ENCODE measurements at regions of chr2 and their contacts with region 1.

Region 1: DNA sequence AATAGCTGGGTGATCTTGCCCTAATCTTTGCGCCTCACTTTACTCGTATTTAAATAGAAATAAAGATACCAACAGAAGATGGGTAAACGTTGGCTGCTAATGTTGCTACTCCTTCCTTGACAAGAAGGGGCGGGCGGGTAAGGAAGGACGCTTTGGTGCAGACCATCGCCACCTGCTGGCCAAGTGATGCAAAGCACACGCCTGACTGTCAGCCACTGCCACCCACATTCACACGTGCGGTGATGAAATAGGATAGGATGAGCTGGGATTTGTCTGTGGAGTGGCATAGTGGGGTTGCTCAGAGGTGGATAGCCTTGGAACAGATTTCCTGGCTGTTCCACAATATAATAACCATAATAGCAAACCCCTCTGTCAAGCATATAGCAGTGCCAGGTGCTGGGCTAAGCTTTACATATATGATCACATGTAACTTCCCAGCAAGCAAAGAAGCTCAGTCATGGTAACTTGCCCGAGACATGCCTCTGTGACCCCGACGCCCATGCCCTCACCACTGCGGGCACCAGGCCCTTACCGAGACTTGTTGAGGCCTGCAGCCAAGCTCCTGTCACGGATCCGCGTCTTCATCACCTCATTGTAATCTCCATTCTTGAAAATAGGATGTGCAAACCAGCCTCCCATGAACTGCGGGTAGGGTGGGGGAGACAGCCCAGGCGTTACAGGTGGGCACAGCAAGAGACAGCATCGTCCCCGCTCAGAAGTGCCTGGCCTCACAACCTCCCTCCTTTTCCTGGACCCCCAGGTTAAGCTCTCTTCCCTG is 39.3 kb downstream of the LCT start:
- DNase-seq: peak; percentile 61
- H3K4me3 ChIP-seq: no peak overlapping the region
- H3K27ac ChIP-seq: no peak overlapping the region
- H3K27me3 ChIP-seq: no peaks in the 10 kb centered on the region
- CTCF ChIP-seq: peak; percentile 94

Region 2: GRCh38 chr2:134988994-134989605 is 808.6 kb before region 1 on chr2:
- CTCF ChIA-PET with region 1: interaction called, 42 read pairs
- POLR2A ChIA-PET with region 1: no interaction called
- DNase-seq: peak; percentile 3
- H3K4me3 ChIP-seq: no peak overlapping the region
- H3K27ac ChIP-seq: no peak overlapping the region
- H3K27me3 ChIP-seq: peaks cover 12% of the 10 kb centered on the region
- CTCF ChIP-seq: peak; percentile 54

Region 3: GRCh38 chr2:135762022-135762421 is 35.7 kb before region 1 on chr2:
- CTCF ChIA-PET with region 1: interaction called, 16 read pairs
- POLR2A ChIA-PET with region 1: no interaction called
- DNase-seq: no peak
- H3K4me3 ChIP-seq: no peak overlapping the region
- H3K27ac ChIP-seq: no peak overlapping the region
- H3K27me3 ChIP-seq: no peaks in the 10 kb centered on the region
- CTCF ChIP-seq: no peak

Region 4: GRCh38 chr2:135773917-135774316 is 23.8 kb before region 1 on chr2:
- CTCF ChIA-PET with region 1: interaction called, 12 read pairs
- POLR2A ChIA-PET with region 1: no interaction called
- DNase-seq: no peak
- H3K4me3 ChIP-seq: no peak overlapping the region
- H3K27ac ChIP-seq: no peak overlapping the region
- H3K27me3 ChIP-seq: no peaks in the 10 kb centered on the region
- CTCF ChIP-seq: no peak

Region 5: GRCh38 chr2:135785032-135785431 is 12.7 kb before region 1 on chr2:
- CTCF ChIA-PET with region 1: interaction called, 72 read pairs
- POLR2A ChIA-PET with region 1: interaction called, 6 read pairs
- DNase-seq: no peak
- H3K4me3 ChIP-seq: no peak overlapping the region
- H3K27ac ChIP-seq: no peak overlapping the region
- H3K27me3 ChIP-seq: no peaks in the 10 kb centered on the region
- CTCF ChIP-seq: peak; percentile 27; the same call in 1 of the 2 replicates

Region 6: GRCh38 chr2:135815269-135815668 is 17.6 kb after region 1 on chr2:
- CTCF ChIA-PET with region 1: interaction called, 15 read pairs
- POLR2A ChIA-PET with region 1: no interaction called
- DNase-seq: no peak
- H3K4me3 ChIP-seq: no peak overlapping the region
- H3K27ac ChIP-seq: no peak overlapping the region
- H3K27me3 ChIP-seq: no peaks in the 10 kb centered on the region
- CTCF ChIP-seq: no peak

Region 7: DNA sequence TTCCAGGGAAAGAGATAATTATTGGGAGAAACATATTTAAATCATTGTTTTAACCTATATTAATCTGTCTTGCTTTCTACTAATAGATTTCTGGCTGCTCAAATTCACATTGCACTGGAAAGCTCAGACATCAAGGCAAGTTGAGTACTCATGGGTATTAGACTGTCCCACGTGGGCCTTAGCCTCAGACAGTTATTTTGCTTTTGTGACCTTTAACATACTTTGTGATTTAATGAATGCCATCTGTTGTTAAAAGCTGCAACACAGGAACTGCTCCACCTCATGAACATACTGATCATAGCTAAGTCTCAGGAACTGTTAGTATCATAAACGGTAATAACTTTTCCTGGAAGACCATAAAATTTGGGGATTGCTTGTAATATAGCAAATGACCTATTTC is 42.0 kb after region 1 on chr2:
- CTCF ChIA-PET with region 1: interaction called, 20 read pairs
- POLR2A ChIA-PET with region 1: no interaction called
- DNase-seq: peak; percentile 59
- H3K4me3 ChIP-seq: no peak overlapping the region
- H3K27ac ChIP-seq: no peak overlapping the region
- H3K27me3 ChIP-seq: no peaks in the 10 kb centered on the region
- CTCF ChIP-seq: no peak

Measured in AG04450 (cell line).